ENCODE measurements at regions of chr2 and their contacts with region 1.

Region 1: GRCh38 chr2:47906157-47907038 is at the start of gene FBXO11:
- DNase-seq: peak; percentile 94
- H3K4me3 ChIP-seq: peak within 1 kb of the TSS; percentile 81 to 96 (median 92)
- H3K27ac ChIP-seq: peak within 1 kb of the TSS; percentile 99 to 100 (median 100)
- H3K4me1 ChIP-seq: peaks cover 0 to 34% (median 19%) of the 10 kb centered on the region in 4 donors
- H3K27me3 ChIP-seq: no peaks in the 10 kb centered on the region
- CTCF ChIP-seq: peak in 3 of 5 experiments; percentile 58 to 74 (median 62)
- EP300 ChIP-seq: no peak
- POLR2A ChIP-seq: peak; percentile 92
- total RNA-seq, gene FBXO11: 19.8 to 80.6 (median 49.8) TPM

Region 2: GRCh38 chr2:46377176-46377581 is 1529.2 kb before region 1 on chr2:
- in situ Hi-C with region 1: no loop called
- intact Hi-C with region 1: no loop called
- DNase-seq: no peak
- H3K4me3 ChIP-seq: no peak overlapping the region
- H3K27ac ChIP-seq: peak overlapping the region in 3 of 4 donors; percentile 7 to 43 (median 36)
- H3K4me1 ChIP-seq: peaks cover 0 to 16% (median 4%) of the 10 kb centered on the region in 4 donors
- H3K27me3 ChIP-seq: no peaks in the 10 kb centered on the region
- CTCF ChIP-seq: no peak
- EP300 ChIP-seq: no peak
- POLR2A ChIP-seq: no peak

Region 3: GRCh38 chr2:47782671-47783485 is 123.5 kb before region 1 on chr2 and contains the start of gene MSH6:
- in situ Hi-C with region 1: loop called in 1 of 4 experiments (anchors 10 kb)
- intact Hi-C with region 1: loop called (anchors 5 kb)
- DNase-seq: peak; percentile 91
- H3K4me3 ChIP-seq: peak within 1 kb of the TSS; percentile 70 to 88 (median 83)
- H3K27ac ChIP-seq: peak within 1 kb of the TSS; percentile 94 to 99 (median 96)
- H3K4me1 ChIP-seq: peaks cover 9 to 24% (median 19%) of the 10 kb centered on the region in 4 donors
- H3K27me3 ChIP-seq: no peaks in the 10 kb centered on the region
- CTCF ChIP-seq: peak in 1 of 5 experiments; percentile 10
- EP300 ChIP-seq: no peak
- POLR2A ChIP-seq: peak; percentile 79
- total RNA-seq, gene MSH6: 15.9 to 21.9 (median 17.2) TPM

Region 4: DNA sequence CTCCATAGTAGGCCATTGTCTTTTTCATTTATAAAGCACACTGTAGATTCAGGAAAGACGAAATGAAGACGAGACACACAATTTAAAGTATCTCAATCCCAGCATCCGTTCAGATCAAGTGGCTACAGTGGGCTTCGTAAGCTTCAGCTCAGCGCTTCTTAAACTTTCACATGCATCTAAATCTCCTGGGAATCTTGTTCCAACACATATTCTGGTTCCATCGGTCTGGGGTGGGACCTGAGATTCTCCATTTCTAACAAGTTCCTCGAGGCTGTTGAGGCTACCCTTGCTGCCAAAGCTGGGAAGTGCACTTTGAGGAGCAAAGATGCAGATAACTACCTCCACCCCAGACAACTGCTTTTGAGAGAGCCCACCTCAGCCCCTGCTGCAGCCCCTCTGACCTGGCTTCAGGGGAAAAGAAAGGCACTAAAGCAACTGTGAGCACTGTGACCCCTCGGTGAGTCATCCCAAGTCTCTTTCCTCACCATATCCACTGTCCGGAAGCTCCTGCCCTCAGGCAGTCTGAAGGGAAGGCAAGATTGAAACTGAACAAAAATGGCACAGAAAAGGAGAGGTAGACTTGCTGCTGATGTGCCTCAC is 201.0 kb after region 1 on chr2:
- in situ Hi-C with region 1: no loop called
- intact Hi-C with region 1: loop called (anchors 10 kb)
- DNase-seq: no peak
- H3K4me3 ChIP-seq: no peak overlapping the region
- H3K27ac ChIP-seq: peak overlapping the region; percentile 30 to 52 (median 36)
- H3K4me1 ChIP-seq: peaks cover 0 to 33% (median 20%) of the 10 kb centered on the region in 4 donors
- H3K27me3 ChIP-seq: no peaks in the 10 kb centered on the region
- CTCF ChIP-seq: no peak
- EP300 ChIP-seq: no peak
- POLR2A ChIP-seq: no peak

Region 5: GRCh38 chr2:48279344-48280090 is 373.1 kb after region 1 on chr2:
- in situ Hi-C with region 1: no loop called
- intact Hi-C with region 1: no loop called
- DNase-seq: no peak
- H3K4me3 ChIP-seq: no peak overlapping the region
- H3K27ac ChIP-seq: no peak overlapping the region
- H3K4me1 ChIP-seq: no peaks in the 10 kb centered on the region
- H3K27me3 ChIP-seq: no peaks in the 10 kb centered on the region
- CTCF ChIP-seq: no peak
- EP300 ChIP-seq: no peak
- POLR2A ChIP-seq: no peak

Region 6: GRCh38 chr2:48433682-48434081 is 527.3 kb after region 1 on chr2:
- in situ Hi-C with region 1: loop called in 1 of 4 experiments (anchors 10 kb)
- intact Hi-C with region 1: no loop called
- DNase-seq: peak; percentile 31
- H3K4me3 ChIP-seq: no peak overlapping the region
- H3K27ac ChIP-seq: no peak overlapping the region
- H3K4me1 ChIP-seq: no peaks in the 10 kb centered on the region
- H3K27me3 ChIP-seq: peaks cover 16% of the 10 kb centered on the region
- CTCF ChIP-seq: no peak
- EP300 ChIP-seq: no peak
- POLR2A ChIP-seq: no peak